ENCODE measurements at regions of chr21 and their contacts with region 1.

Region 1: DNA sequence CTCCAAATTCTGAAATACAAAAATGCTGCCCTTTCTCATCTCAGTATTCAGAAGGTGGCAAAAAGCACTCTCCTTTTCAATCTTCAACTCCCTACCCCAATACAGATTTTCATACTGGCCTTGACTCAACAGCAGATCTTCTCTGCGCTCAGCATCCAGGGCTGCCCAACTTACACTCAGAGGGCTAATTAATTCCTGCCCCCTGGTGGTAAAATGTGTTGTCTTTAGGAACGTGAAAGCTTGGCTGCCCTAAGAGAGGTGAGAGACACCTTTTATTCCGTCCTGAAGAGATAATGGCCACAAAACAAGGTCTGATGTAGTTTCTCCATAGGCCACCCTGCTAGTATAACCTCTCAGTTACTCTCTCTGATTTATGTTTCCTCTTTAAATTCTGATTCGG is 25.0 kb downstream of the KRTAP24-1 start:
- DNase-seq: no peak
- ATAC-seq: no peak
- H3K4me3 ChIP-seq: no peak overlapping the region
- H3K27ac ChIP-seq: no peak overlapping the region
- H3K4me1 ChIP-seq: no peaks in the 10 kb centered on the region
- H3K27me3 ChIP-seq: no peaks in the 10 kb centered on the region
- CTCF ChIP-seq: peak in 8 of 12 donors; percentile 13 to 41 (median 30)
- POLR2A ChIP-seq: no peak

Region 2: DNA sequence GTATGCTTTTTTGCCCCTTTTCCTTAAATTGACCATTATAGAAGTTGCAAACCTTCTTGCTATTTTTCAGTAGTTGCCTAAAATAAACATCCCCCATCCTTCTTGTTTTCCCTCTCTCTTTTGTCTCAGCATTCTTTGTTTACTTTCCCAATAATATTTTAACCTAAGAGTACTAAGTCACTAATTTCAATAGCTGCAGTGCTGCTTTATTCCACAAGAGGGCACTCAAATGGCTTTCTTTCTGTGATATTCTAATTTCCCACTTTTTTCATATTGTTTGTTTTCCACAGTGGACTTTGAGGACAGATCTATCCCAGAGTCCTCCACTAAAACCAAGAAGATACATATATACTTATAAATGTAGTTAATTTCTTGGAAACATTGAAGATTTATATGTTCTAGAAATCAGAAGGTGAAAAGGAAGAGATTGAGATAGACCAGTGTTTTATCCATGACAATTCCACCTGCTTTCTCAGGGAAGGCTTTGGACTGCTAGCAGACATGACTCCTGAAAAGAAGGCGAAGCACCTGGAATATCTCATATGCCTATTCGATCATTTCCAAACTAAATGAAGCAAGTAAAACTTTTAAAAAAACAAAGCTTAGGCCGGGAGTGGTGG is 213.2 kb before region 1 on chr21:
- intact Hi-C with region 1: loop called in 2 of 10 experiments (anchors 10 kb)
- DNase-seq: no peak
- ATAC-seq: no peak
- H3K4me3 ChIP-seq: no peak overlapping the region
- H3K27ac ChIP-seq: no peak overlapping the region
- H3K4me1 ChIP-seq: no peaks in the 10 kb centered on the region
- H3K27me3 ChIP-seq: no peaks in the 10 kb centered on the region
- CTCF ChIP-seq: peak; percentile 64 to 91 (median 80)
- POLR2A ChIP-seq: no peak

Region 3: GRCh38 chr21:30072496-30072895 is 185.3 kb before region 1 on chr21:
- intact Hi-C with region 1: loop called in 3 of 10 experiments (anchors 2 to 10 kb)
- DNase-seq: no peak
- ATAC-seq: no peak
- H3K4me3 ChIP-seq: no peak overlapping the region
- H3K27ac ChIP-seq: no peak overlapping the region
- H3K4me1 ChIP-seq: no peaks in the 10 kb centered on the region
- H3K27me3 ChIP-seq: no peaks in the 10 kb centered on the region
- CTCF ChIP-seq: peak in 6 of 12 donors; percentile 7 to 38 (median 28)
- POLR2A ChIP-seq: no peak